Activated T-helper 1 cell treated with anti-CD3 and anti-CD28 coated beads, Interleukin-12 subunit alpha, Interleukin-12 subunit beta, Interleukin-2, Interleukin-4 antibody, amounts not matched to agents 30 ng/mL and 10 ng/mL and 1 ng/mL, durations not matched to agents 14 hours and 24 hours and 36 hours (primary cell): ENCODE measurements at regions of chr9 and their contacts with region 1.

Region 1: DNA sequence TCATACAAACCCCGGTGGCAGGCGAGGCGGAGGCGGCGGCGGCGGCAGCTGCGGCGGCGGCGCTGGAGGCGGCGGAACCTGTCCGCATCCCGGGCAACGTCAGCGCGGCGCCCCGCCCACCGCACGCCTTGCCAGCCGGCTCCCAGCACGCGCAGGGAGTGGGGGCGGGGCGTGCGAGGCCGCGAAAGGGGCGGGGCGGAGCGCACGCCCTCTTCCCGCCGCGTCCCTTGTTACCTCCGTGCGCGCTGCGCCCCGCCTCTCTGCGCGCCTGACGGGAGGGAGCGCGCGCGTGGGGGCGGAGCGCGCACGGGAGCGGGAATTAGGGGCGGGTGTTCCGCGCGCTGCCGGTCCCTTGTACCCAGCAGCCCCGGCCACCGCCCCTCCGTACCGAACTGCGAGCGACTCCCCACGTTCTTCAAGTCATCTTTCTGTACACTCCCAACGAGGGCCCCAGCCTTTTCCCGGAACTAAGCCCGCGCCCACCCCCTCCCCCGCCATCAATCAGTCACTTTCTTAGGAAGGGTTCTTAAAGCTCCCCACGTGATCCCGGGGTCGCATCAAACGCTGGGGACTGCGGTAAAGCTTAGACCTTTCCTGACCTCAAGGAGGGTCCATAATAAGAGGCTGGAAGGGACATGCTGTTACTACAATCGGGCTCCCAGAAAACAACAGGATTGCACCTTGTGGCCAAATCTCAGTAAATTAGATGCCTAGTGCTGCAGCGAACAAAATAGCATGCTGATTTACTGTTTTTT is at the start of gene AGTPBP1:
- DNase-seq: peak; percentile 94
- H3K4me3 Mint-ChIP-seq: peak within 1 kb of the TSS; percentile 98
- H3K27ac Mint-ChIP-seq: peak within 1 kb of the TSS; percentile 95
- H3K4me1 Mint-ChIP-seq: peaks cover 37% of the 10 kb centered on the region
- H3K27me3 Mint-ChIP-seq: peaks cover 7% of the 10 kb centered on the region
- total RNA-seq, gene AGTPBP1: 23.5 and 26.2 TPM in 2 replicates

Region 2: GRCh38 chr9:85702726-85703289 is 39.2 kb before region 1 on chr9:
- intact Hi-C with region 1: loop called (anchors 1 kb)
- DNase-seq: no peak
- H3K4me3 Mint-ChIP-seq: no peak overlapping the region
- H3K27ac Mint-ChIP-seq: no peak overlapping the region
- H3K4me1 Mint-ChIP-seq: no peaks in the 10 kb centered on the region
- H3K27me3 Mint-ChIP-seq: no peaks in the 10 kb centered on the region

Region 3: GRCh38 chr9:85940832-85941621 is 199.0 kb after region 1 on chr9 and contains the start of gene NAA35:
- intact Hi-C with region 1: loop called (anchors 1 kb)
- DNase-seq: peak; percentile 99
- H3K4me3 Mint-ChIP-seq: no peak within 1 kb of the TSS
- H3K27ac Mint-ChIP-seq: peak within 1 kb of the TSS; percentile 97
- H3K4me1 Mint-ChIP-seq: peaks cover 16% of the 10 kb centered on the region
- H3K27me3 Mint-ChIP-seq: no peaks in the 10 kb centered on the region
- total RNA-seq, gene NAA35: 28.6 and 32.9 TPM in 2 replicates

Region 4: DNA sequence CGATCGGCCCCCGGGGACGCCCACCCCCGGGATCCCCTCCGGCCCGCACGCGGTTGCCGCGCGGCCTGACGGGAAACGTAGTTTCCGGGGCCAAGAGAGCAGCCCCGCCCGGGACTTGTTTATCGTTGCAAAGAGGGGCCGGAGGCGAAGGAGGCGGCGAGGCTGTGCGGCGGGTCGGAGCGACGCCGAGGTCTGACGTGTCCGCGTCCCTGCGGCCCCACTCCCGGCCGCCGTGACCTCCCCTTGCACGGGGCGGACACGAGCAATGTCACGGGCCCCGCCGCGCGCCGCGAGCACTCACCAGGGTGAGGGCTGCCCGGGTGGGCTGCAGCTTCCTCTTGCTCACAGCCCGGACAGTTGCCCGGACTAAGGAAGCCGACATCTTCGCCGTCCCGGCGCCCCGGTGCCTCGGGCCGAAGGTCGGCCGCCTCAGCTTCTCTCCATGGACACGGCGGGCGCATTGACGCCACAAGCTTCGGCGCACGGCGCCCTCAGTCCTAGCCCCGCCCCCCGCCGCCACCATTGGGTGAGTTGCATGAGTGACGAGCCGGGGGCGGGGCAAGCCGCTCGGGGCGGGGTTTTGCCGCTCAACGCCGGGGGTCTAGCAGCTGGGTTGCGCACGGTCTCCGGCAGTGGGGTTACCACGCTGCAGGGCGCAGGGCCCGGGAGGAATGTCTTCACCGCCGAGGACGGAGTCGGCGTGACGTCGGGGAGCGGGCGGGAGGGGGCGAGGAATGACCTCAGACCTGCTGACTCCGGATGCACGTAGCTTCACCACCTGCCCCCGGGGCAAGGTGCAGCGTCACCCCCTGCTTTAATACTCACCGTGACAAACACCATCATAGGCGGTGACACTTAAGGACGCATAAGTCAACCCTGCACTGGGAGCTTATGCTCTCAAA is 540.3 kb after region 1 on chr9 and contains the start of gene ISCA1:
- intact Hi-C with region 1: loop called (anchors 1 kb)
- DNase-seq: peak; percentile 91
- H3K4me3 Mint-ChIP-seq: peak within 1 kb of the TSS; percentile 89
- H3K27ac Mint-ChIP-seq: peak within 1 kb of the TSS; percentile 96
- H3K4me1 Mint-ChIP-seq: peaks cover 42% of the 10 kb centered on the region
- H3K27me3 Mint-ChIP-seq: no peaks in the 10 kb centered on the region
- total RNA-seq, gene ISCA1: 27.4 and 30.3 TPM in 2 replicates